ENCODE measurements at regions of chr4 and their contacts with region 1.

Region 1: GRCh38 chr4:39697740-39698423 is at the start of gene UBE2K:
- DNase-seq: peak; percentile 57 to 92 (median 78)
- H3K4me3 ChIP-seq: peak within 1 kb of the TSS; percentile 66 to 98 (median 89)
- H3K27ac ChIP-seq: peak within 1 kb of the TSS; percentile 78 to 99 (median 94)
- H3K27me3 ChIP-seq: no peaks in the 10 kb centered on the region
- CTCF ChIP-seq: peak in 43 of 56 donors; percentile 10 to 68 (median 43)
- total RNA-seq, gene UBE2K: 44.7 to 140 (median 90.1) TPM

Region 2: DNA sequence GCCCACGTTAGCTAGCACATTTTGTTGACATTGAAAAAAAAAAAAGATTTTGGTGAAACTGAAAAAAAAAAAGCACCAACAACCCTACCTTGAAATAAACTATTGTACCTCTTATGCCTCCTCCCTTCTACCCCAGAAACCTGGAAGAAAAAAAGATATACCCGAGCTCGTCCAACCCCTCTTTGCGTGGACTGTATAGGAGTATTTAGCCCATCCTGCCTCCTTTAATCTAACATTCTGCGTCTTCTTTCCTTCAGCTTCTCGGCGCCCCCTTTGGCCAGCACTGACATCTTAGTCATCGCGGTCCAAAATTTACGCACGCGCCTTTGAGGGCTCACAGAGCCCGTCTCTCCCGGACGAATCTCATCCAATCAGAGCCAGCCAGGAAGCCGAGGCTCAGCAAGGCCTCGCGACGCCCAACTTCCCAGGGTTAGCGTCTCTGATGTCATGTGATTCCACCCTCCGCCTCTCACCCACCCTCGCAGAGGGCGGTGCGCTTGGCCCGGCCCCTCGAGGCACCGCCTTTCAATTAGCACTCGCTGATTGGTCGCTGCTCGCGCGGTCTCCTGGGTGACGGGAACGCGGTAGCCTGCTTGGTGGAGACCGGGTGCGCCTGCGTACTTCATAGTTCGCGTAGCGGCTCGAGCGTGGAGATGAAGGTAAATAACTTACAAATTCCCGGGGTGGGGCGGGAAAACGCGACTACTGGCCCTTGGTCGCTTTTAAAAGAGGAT is 515.8 kb before region 1 on chr4 and contains the start of gene WDR19:
- intact Hi-C with region 1: loop called in 1 of 2 experiments (anchors 10 kb)
- DNase-seq: peak; percentile 98 to 100 (median 99)
- H3K4me3 ChIP-seq: peak within 1 kb of the TSS; percentile 55 to 93 (median 82)
- H3K27ac ChIP-seq: peak within 1 kb of the TSS; percentile 40 to 92 (median 83)
- H3K27me3 ChIP-seq: no peaks in the 10 kb centered on the region
- CTCF ChIP-seq: peak in 55 of 56 donors; percentile 20 to 78 (median 59)
- total RNA-seq, gene WDR19: 39.7 to 107 (median 68.1) TPM

Region 3: GRCh38 chr4:39469429-39470077 is 228.3 kb before region 1 on chr4:
- intact Hi-C with region 1: loop called (anchors 5 kb)
- DNase-seq: peak in 4 of 10 donors; percentile 15 to 40 (median 24)
- H3K4me3 ChIP-seq: peak overlapping the region in 10 of 59 donors; percentile 1 to 28 (median 6)
- H3K27ac ChIP-seq: peak overlapping the region; percentile 17 to 99 (median 84)
- H3K27me3 ChIP-seq: no peaks in the 10 kb centered on the region
- CTCF ChIP-seq: peak; percentile 81 to 97 (median 92)

Region 4: DNA sequence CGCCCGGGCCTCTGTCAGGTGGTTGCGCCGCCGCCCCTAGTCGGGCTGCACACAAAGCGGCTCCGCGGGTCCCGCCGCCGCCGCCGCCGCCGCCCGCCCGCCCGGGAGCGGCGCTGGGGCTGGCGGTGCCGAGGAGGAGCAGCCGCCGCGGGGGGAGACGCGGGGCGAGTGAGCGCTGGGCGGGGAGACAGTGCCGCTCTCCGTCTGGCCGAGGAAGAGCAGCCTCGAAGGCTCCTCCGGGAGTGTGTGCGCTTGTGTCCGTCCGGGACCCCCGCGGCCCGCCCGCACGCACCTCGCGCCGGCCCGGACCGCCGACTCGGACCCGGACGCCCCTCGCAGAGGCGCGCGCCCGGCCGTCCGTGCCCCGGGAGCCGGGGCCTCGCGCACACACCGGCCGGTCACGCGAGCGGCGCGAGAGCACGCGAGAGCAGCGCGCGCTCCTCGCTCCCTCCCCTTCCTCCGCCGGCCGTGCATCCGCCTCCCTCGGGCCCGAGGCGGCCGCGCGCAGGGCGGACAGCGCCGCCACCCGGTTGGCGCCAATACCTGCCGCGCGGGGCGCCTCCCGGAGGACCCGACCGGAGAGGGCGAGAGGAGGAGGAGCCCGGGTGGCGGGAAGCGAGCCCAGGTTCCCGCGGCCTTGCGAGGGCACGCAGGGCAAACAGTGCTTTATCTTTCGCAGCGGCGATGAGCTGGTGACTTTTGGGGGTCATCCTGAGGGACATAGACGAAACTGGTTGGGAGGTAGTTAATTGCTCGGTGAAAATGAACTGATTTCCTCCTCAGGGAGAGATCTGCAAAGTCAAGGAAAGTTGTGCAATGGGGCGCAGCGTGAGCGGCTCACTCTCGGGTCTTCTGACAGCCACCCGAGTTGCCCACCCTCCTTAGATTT is 279.9 kb after region 1 on chr4 and contains the start of gene PDS5A:
- intact Hi-C with region 1: loop called (anchors 1 kb)
- DNase-seq: peak; percentile 67 to 89 (median 81)
- H3K4me3 ChIP-seq: peak within 1 kb of the TSS; percentile 62 to 98 (median 93)
- H3K27ac ChIP-seq: peak within 1 kb of the TSS; percentile 84 to 98 (median 95)
- H3K27me3 ChIP-seq: no peaks in the 10 kb centered on the region
- CTCF ChIP-seq: peak; percentile 54 to 93 (median 80)
- total RNA-seq, gene PDS5A: 43.7 to 92.5 (median 61.9) TPM

Measured in dorsolateral prefrontal cortex (tissue), 120 donors.